ENCODE measurements at regions of chr1 and their contacts with region 1.

Region 1: DNA sequence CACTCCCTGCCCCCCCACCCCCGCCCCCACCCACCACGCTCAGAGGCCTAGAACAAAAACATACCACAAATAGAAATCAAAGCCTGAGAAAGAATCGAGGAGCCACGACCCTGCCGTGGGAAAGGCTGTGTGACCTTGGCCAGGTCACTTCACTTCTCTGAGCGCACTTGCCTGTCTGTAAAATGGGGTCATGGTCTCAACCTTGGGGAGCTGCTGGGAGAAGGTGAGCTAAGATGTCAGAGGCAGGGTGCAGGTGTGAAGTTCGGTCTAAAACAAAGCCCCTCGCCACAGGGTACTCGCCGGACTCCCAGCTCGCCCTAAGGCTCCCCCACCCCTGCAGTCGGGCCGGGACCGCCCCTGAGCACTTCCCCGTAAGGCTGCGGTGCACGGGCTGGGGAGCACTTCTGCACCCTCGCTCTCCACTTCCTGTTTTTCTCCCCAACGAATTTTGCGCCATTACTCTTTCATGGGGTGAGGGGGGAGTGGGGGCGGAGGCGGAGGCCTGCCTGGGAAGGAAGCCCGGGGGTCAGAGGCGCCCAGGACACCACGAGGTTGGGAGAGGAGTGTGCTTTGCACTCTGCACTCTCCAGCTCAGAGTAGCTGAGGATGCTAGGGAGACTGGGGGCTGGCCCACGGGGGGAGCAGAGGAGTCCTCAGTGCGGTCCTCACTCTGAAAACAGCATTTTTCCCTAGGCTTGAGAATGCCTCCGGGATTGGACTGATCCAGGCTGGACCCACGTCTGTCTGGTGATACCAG is 21.9 kb upstream of the PIK3CD start:
- DNase-seq: no peak
- ATAC-seq: no peak
- H3K4me3 Mint-ChIP-seq: no peak overlapping the region
- H3K27ac Mint-ChIP-seq: no peak overlapping the region
- H3K4me1 Mint-ChIP-seq: peaks cover 5% of the 10 kb centered on the region
- H3K27me3 Mint-ChIP-seq: peaks cover 19% of the 10 kb centered on the region
- CTCF ChIP-seq: no peak

Region 2: DNA sequence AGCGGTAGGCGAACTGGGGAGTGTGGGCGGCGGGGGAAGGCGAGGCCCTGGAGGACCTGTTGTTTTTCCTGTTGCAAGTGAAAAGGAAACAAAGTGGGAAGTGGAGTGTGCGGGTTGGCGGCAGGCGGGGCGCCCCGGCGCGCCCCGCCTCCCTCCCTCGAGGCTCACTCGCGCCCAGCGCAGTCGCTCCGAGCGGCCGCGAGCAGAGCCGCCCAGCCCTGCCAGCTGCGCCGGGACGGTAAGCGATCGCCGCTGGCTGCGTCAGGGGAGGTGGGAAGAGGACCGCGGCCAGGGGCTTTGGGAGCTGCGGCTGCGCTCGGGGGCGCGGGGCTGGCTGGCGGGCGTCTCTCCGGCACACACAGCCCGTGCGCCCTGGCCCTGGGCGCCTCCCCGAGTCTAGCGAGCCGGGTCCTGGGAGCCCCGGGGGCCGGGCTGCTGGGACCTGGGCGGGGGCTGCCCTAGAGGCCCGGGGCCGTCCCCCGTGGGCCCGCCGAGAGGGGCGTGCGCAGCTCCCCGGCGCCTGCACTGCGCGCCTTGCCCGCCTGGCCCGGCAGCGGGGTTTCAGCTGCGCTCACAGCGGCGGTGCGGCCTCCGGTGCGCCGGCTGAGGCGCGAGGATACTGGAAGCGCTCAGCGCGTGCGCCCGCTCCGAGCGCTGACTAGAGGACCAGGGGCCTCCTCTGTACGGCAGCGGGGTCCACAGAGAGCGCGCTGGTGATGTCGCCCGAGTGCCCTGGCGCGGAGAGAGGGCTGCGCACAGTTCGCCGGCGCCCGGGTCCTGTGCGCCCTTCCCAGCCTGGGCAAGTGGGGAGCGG is 22.1 kb after region 1 on chr1 and contains the start of gene PIK3CD:
- CTCF ChIA-PET with region 1: interaction called, 24 read pairs
- POLR2A ChIA-PET with region 1: no interaction called
- DNase-seq: peak; percentile 70
- ATAC-seq: peak; percentile 83
- H3K4me3 Mint-ChIP-seq: peak within 1 kb of the TSS; percentile 72
- H3K27ac Mint-ChIP-seq: no peak within 1 kb of the TSS
- H3K4me1 Mint-ChIP-seq: peaks cover 4% of the 10 kb centered on the region; the same call in 1 of the 2 replicates
- H3K27me3 Mint-ChIP-seq: peaks cover 58% of the 10 kb centered on the region
- CTCF ChIP-seq: no peak
- total RNA-seq, gene PIK3CD: 17.9 to 23.1 TPM (median 20.2 TPM) in 3 replicates

Region 3: GRCh38 chr1:9689011-9689706 is 59.5 kb after region 1 on chr1:
- CTCF ChIA-PET with region 1: interaction called, 40 read pairs
- POLR2A ChIA-PET with region 1: no interaction called
- DNase-seq: peak; percentile 92
- ATAC-seq: peak; percentile 79
- H3K4me3 Mint-ChIP-seq: peak overlapping the region; percentile 77
- H3K27ac Mint-ChIP-seq: no peak overlapping the region
- H3K4me1 Mint-ChIP-seq: peaks cover 36% of the 10 kb centered on the region
- H3K27me3 Mint-ChIP-seq: peaks cover 40% of the 10 kb centered on the region
- CTCF ChIP-seq: no peak